ENCODE measurements at regions of chr1 and their contacts with region 1.

Region 1: GRCh38 chr1:201511941-201512539 is 5.1 kb upstream of the CSRP1 start:
- DNase-seq: no peak
- H3K4me3 ChIP-seq: no peak overlapping the region
- H3K27ac ChIP-seq: no peak overlapping the region
- H3K27me3 ChIP-seq: no peaks in the 10 kb centered on the region
- CTCF ChIP-seq: no peak

Region 2: GRCh38 chr1:201447911-201448871 is 63.8 kb before region 1 on chr1:
- CTCF ChIA-PET with region 1: interaction called, 111 read pairs
- POLR2A ChIA-PET with region 1: interaction called, 5 read pairs
- DNase-seq: peak; percentile 33
- H3K4me3 ChIP-seq: no peak overlapping the region
- H3K27ac ChIP-seq: no peak overlapping the region
- H3K27me3 ChIP-seq: no peaks in the 10 kb centered on the region
- CTCF ChIP-seq: peak; percentile 82

Region 3: DNA sequence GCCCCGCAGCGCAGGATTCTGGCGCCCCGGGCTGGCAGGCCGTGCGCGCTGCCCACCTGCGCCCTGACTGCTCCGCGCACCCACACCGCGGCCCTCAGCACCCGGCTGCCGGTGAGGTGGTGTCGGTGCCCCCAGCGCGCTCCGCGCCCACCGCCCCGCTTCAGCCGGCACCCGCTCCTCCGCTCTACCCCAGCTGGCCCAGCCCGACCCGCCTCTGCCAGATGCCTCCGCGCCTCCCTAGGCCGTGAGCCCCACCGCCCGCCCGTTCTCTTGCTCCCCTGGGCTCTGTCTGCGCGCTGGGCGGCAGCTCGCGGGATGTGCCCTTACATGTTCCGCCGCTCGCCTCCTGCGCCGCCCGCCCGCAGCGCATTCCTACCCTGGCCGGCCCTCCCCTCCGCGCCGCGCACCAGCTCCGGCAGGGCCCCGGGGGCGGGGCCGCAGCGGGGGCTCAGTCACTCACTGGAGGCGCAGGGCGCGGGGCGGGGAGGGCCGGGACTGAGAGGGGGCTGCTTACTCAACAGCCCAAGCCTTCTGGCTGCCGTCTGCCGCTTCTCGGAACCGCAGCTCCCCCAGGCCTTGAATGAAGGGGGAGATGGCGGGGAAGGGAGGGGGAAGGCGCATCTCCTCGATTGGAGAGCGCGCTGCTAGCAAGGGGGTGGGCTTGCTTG is 43.1 kb before region 1 on chr1 and contains the start of gene PHLDA3:
- CTCF ChIA-PET with region 1: interaction called, 20 read pairs
- POLR2A ChIA-PET with region 1: interaction called, 8 read pairs
- DNase-seq: peak; percentile 85
- H3K4me3 ChIP-seq: peak within 1 kb of the TSS; percentile 99
- H3K27ac ChIP-seq: peak within 1 kb of the TSS; percentile 75
- H3K27me3 ChIP-seq: no peaks in the 10 kb centered on the region
- CTCF ChIP-seq: no peak
- polyA plus RNA-seq, gene PHLDA3: 58.9 and 73.9 TPM in 2 replicates

Region 4: GRCh38 chr1:201481761-201482493 is 30.1 kb before region 1 on chr1:
- CTCF ChIA-PET with region 1: interaction called, 307 read pairs
- POLR2A ChIA-PET with region 1: interaction called, 21 read pairs
- DNase-seq: no peak
- H3K4me3 ChIP-seq: no peak overlapping the region
- H3K27ac ChIP-seq: no peak overlapping the region
- H3K27me3 ChIP-seq: no peaks in the 10 kb centered on the region
- CTCF ChIP-seq: peak; percentile 82

Region 5: GRCh38 chr1:201500670-201501120 is 11.3 kb before region 1 on chr1:
- CTCF ChIA-PET with region 1: interaction called, 75 read pairs
- POLR2A ChIA-PET with region 1: interaction called, 14 read pairs
- DNase-seq: no peak
- H3K4me3 ChIP-seq: no peak overlapping the region; the same call in 1 of the 2 replicates
- H3K27ac ChIP-seq: peak overlapping the region; percentile 72
- H3K27me3 ChIP-seq: no peaks in the 10 kb centered on the region
- CTCF ChIP-seq: no peak

Region 6: GRCh38 chr1:201530741-201531531 is 18.9 kb after region 1 on chr1:
- CTCF ChIA-PET with region 1: interaction called, 65 read pairs
- POLR2A ChIA-PET with region 1: no interaction called
- DNase-seq: no peak
- H3K4me3 ChIP-seq: no peak overlapping the region
- H3K27ac ChIP-seq: peak overlapping the region; percentile 31
- H3K27me3 ChIP-seq: no peaks in the 10 kb centered on the region
- CTCF ChIP-seq: peak; percentile 92